ENCODE measurements at regions of chr12 and their contacts with region 1.

Region 1: DNA sequence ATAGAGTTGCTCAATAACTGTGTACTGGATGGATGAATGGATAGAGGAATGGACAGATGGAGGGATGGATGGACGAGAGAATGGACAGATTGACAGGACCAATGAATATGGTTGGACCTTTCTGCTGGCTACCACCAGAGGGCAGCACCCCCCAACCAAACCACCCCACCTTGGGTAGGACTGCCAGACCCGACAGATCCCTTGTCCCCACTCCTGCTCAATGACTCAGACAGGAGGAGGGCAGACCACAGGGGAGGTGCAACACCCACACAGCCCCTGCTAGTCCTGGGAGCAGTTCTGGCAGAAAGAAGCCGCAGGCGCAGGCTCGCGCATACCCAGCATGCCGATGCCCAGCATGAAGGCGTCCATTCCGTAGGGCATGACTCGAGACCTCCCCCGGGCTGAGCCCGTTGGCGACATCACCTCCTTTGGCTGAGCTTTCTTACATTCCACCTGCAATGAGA is 12.4 kb downstream of the MSI1 start:
- DNase-seq: peak; percentile 76 to 89 (median 84)
- H3K4me3 ChIP-seq: peak overlapping the region in 13 of 59 donors; percentile 4 to 32 (median 22)
- H3K27ac ChIP-seq: peak overlapping the region in 17 of 59 donors; percentile 12 to 72 (median 42)
- H3K27me3 ChIP-seq: no peaks in the 10 kb centered on the region
- CTCF ChIP-seq: peak; percentile 72 to 95 (median 92)

Region 2: DNA sequence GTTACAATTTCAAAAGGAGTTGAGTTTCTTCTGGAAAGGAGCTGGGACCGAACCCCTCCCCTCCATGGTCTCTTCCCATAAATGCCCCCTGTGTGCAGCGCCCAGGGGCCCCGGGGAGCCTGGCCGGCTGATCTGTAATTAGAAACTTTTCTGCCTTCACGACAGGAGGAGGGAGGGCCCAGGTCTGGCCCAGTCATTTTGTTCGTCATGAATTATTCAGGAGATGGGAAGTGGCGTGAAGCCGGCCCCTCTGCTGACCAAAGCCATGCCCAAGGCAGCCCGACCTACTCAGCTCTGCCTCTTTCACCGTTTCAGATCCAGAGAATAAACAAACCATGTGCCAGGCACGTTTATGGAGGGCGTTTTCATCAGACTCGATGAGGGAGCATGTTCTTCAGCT is 45.6 kb after region 1 on chr12:
- intact Hi-C with region 1: no loop called
- DNase-seq: peak in 3 of 10 donors; percentile 20 to 37 (median 29)
- H3K4me3 ChIP-seq: no peak overlapping the region
- H3K27ac ChIP-seq: peak overlapping the region in 2 of 59 donors; percentile 28 to 32
- H3K27me3 ChIP-seq: peaks cover 0 to 15% (median 6%) of the 10 kb centered on the region in 45 donors
- CTCF ChIP-seq: no peak

Region 3: GRCh38 chr12:120437754-120438494 is 81.3 kb after region 1 on chr12 and contains the start of gene COX6A1:
- intact Hi-C with region 1: loop called in 1 of 2 experiments (anchors 5 kb)
- DNase-seq: peak; percentile 87 to 97 (median 96)
- H3K4me3 ChIP-seq: peak within 1 kb of the TSS; percentile 64 to 98 (median 88)
- H3K27ac ChIP-seq: peak within 1 kb of the TSS; percentile 40 to 93 (median 85)
- H3K27me3 ChIP-seq: no peaks in the 10 kb centered on the region
- CTCF ChIP-seq: peak in 42 of 56 donors; percentile 10 to 67 (median 41)
- total RNA-seq, gene COX6A1: 341 to 794 (median 594) TPM

Region 4: GRCh38 chr12:120445911-120446843 is 89.6 kb after region 1 on chr12 and contains the starts of genes GATC and TRIAP1:
- intact Hi-C with region 1: loop called in 1 of 2 experiments (anchors 5 kb)
- DNase-seq: peak; percentile 74 to 93 (median 82)
- H3K4me3 ChIP-seq: peak within 1 kb of the TSS; percentile 73 to 100 (median 96)
- H3K27ac ChIP-seq: peak within 1 kb of the TSS in 58 of 59 donors; percentile 17 to 95 (median 80)
- H3K27me3 ChIP-seq: no peaks in the 10 kb centered on the region
- CTCF ChIP-seq: peak in 43 of 56 donors; percentile 6 to 64 (median 35)
- total RNA-seq, gene GATC: 18.3 to 41.4 (median 28.7) TPM
- total RNA-seq, gene TRIAP1: 5.4 to 16.5 (median 11.1) TPM

Region 5: GRCh38 chr12:120540445-120540844 is 183.8 kb after region 1 on chr12:
- intact Hi-C with region 1: loop called in 1 of 2 experiments (anchors 10 kb)
- DNase-seq: no peak
- H3K4me3 ChIP-seq: no peak overlapping the region
- H3K27ac ChIP-seq: peak overlapping the region in 2 of 59 donors; percentile 29 to 73
- H3K27me3 ChIP-seq: no peaks in the 10 kb centered on the region
- CTCF ChIP-seq: no peak

Measured in dorsolateral prefrontal cortex (tissue), 120 donors.